PC-9 (cell line): ENCODE measurements at regions of chr6 and their contacts with region 1.

Region 1: GRCh38 chr6:104682722-104683643 is 176.7 kb downstream of the HACE1 start:
- DNase-seq: peak in 1 of 2 experiments; percentile 45
- H3K4me3 ChIP-seq: no peak overlapping the region
- H3K27ac ChIP-seq: no peak overlapping the region
- H3K4me1 ChIP-seq: no peaks in the 10 kb centered on the region
- H3K27me3 ChIP-seq: no peaks in the 10 kb centered on the region
- CTCF ChIP-seq: peak; percentile 92

Region 2: GRCh38 chr6:104669483-104669882 is 13.5 kb before region 1 on chr6:
- CTCF ChIA-PET with region 1: interaction called, 12 read pairs
- POLR2A ChIA-PET with region 1: no interaction called
- intact Hi-C with region 1: no loop called
- DNase-seq: no peak
- H3K4me3 ChIP-seq: no peak overlapping the region
- H3K27ac ChIP-seq: no peak overlapping the region
- H3K4me1 ChIP-seq: no peaks in the 10 kb centered on the region
- H3K27me3 ChIP-seq: no peaks in the 10 kb centered on the region
- CTCF ChIP-seq: no peak

Region 3: GRCh38 chr6:104771258-104771832 is 88.4 kb after region 1 on chr6:
- CTCF ChIA-PET with region 1: interaction called, 17 read pairs
- POLR2A ChIA-PET with region 1: no interaction called
- intact Hi-C with region 1: loop called (anchors 1 kb)
- DNase-seq: no peak
- H3K4me3 ChIP-seq: no peak overlapping the region
- H3K27ac ChIP-seq: no peak overlapping the region
- H3K4me1 ChIP-seq: no peaks in the 10 kb centered on the region
- H3K27me3 ChIP-seq: no peaks in the 10 kb centered on the region
- CTCF ChIP-seq: peak; percentile 85

Region 4: DNA sequence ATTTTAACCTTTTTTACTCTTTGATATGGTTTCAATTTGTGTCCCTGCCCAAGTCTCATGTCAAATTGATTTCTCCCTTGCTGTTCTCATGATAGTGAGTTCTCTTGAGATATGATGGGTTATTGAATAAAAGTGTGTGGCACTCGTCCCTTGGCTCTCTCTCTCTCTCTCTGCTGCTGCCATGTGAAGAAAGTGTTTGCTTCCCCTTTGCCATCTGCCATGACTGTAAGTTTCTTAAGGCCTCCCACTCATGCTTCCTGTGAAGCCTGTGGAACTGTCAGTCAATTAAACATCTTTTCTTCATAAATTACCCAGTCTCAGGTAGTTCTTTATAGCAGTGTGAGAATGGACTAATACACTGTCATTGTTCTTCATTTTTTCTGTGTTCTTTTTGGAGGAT is 322.5 kb after region 1 on chr6:
- CTCF ChIA-PET with region 1: no interaction called
- POLR2A ChIA-PET with region 1: no interaction called
- intact Hi-C with region 1: no loop called
- DNase-seq: no peak
- H3K4me3 ChIP-seq: no peak overlapping the region
- H3K27ac ChIP-seq: no peak overlapping the region
- H3K4me1 ChIP-seq: no peaks in the 10 kb centered on the region
- H3K27me3 ChIP-seq: no peaks in the 10 kb centered on the region
- CTCF ChIP-seq: no peak